SK-N-SH (cell line): ENCODE measurements at regions of chr2 and their contacts with region 1.

Region 1: GRCh38 chr2:113390124-113390849 is 47.2 kb upstream of the ZNG1B start:
- DNase-seq: peak; percentile 75
- H3K4me3 ChIP-seq: peak overlapping the region; percentile 24 to 66; a peak in 3 of 4 replicates
- H3K27ac ChIP-seq: no peak overlapping the region; a peak in 1 of 4 replicates
- H3K4me1 ChIP-seq: no peaks in the 10 kb centered on the region
- H3K27me3 ChIP-seq: peaks cover 37% of the 10 kb centered on the region; the same call in 1 of the 2 replicates
- CTCF ChIP-seq: peak; percentile 99
- EP300 ChIP-seq: no peak
- RAD21 ChIP-seq: peak; percentile 89

Region 2: DNA sequence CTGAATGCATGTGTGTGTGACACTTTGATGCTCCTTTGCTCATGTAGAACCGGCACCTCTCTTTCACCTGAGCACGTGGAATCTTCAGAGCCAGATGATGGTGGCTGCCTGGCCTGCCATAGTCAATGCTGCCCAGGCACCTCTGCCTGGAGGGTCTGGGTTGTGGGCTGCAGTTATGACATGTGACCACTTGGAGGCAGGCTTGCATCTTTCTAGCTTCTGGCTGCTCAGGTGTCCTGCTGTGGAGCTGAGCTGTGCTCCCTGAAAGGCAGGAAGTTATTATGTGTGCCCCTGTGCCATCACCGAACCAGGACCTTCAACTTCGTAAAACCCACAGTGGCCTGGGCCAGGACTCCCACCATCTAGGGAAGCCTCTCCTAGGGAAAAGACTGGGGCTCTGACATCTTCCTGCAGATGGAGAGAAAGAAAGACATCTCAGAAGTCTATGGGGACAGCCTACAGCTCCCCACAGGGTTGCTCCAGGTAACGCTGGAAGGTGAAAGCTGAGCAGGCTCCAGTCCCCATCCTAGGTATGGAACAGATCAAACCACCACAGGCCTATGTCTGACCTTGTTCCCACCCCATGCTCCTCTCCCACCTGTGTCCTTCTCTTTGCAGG is 186.3 kb before region 1 on chr2:
- CTCF ChIA-PET with region 1: interaction called, 98 read pairs
- POLR2A ChIA-PET with region 1: no interaction called
- DNase-seq: peak; percentile 86
- H3K4me3 ChIP-seq: no peak overlapping the region; a peak in 1 of 4 replicates
- H3K27ac ChIP-seq: no peak overlapping the region
- H3K4me1 ChIP-seq: no peaks in the 10 kb centered on the region; a peak in 1 of 4 replicates
- H3K27me3 ChIP-seq: no peaks in the 10 kb centered on the region
- CTCF ChIP-seq: peak; percentile 88
- EP300 ChIP-seq: no peak
- RAD21 ChIP-seq: peak; percentile 96

Region 3: GRCh38 chr2:113248997-113249770 is 141.1 kb before region 1 on chr2:
- CTCF ChIA-PET with region 1: interaction called, 25 read pairs
- POLR2A ChIA-PET with region 1: no interaction called
- DNase-seq: peak; percentile 77
- H3K4me3 ChIP-seq: no peak overlapping the region; a peak in 1 of 4 replicates
- H3K27ac ChIP-seq: no peak overlapping the region
- H3K4me1 ChIP-seq: no peaks in the 10 kb centered on the region
- H3K27me3 ChIP-seq: no peaks in the 10 kb centered on the region; the same call in 1 of the 2 replicates
- CTCF ChIP-seq: peak; percentile 95
- EP300 ChIP-seq: no peak
- RAD21 ChIP-seq: peak; percentile 83

Region 4: DNA sequence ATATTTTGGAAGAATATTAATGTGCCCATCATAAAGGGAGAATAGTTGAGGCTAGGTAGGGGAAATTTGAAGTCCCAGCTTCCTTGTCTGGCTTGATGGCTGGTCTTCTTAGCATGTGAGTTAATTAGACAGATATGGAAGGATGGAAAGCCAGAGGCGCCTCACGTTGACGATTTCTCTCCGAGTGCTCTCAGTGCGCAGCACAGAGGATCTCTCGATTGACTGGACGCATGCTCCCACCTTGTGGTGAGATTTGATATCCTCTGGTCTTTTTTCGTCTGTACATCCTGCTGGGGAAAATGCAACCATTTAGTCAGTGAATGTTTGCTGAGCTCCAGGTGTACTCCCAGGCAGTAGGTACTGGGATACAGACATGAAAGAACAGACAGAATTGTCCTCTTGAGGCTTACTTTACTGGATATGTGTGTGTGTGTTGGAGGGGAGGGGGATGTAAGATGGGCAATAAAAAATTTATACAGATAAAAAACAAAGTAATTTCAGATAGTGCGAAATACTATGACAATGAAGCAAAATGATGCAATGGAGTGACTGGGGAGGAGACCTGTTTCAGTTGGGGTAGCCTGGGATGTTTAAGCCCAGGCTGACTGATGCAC is 19.7 kb before region 1 on chr2:
- CTCF ChIA-PET with region 1: interaction called, 17 read pairs
- POLR2A ChIA-PET with region 1: no interaction called
- DNase-seq: peak; percentile 58
- H3K4me3 ChIP-seq: no peak overlapping the region; a peak in 1 of 4 replicates
- H3K27ac ChIP-seq: no peak overlapping the region
- H3K4me1 ChIP-seq: no peaks in the 10 kb centered on the region
- H3K27me3 ChIP-seq: peaks cover 21% of the 10 kb centered on the region; the same call in 1 of the 2 replicates
- CTCF ChIP-seq: peak; percentile 69
- EP300 ChIP-seq: no peak
- RAD21 ChIP-seq: peak; percentile 85

Region 5: GRCh38 chr2:113407446-113408099 is 17.3 kb after region 1 on chr2:
- CTCF ChIA-PET with region 1: interaction called, 14 read pairs
- POLR2A ChIA-PET with region 1: no interaction called
- DNase-seq: no peak
- H3K4me3 ChIP-seq: no peak overlapping the region
- H3K27ac ChIP-seq: no peak overlapping the region
- H3K4me1 ChIP-seq: no peaks in the 10 kb centered on the region
- H3K27me3 ChIP-seq: peaks cover 38% of the 10 kb centered on the region
- CTCF ChIP-seq: peak; percentile 35
- EP300 ChIP-seq: no peak
- RAD21 ChIP-seq: no peak

Region 6: GRCh38 chr2:113720167-113720566 is 329.9 kb after region 1 on chr2:
- CTCF ChIA-PET with region 1: no interaction called
- POLR2A ChIA-PET with region 1: no interaction called
- DNase-seq: peak; percentile 28
- H3K4me3 ChIP-seq: no peak overlapping the region; a peak in 1 of 4 replicates
- H3K27ac ChIP-seq: no peak overlapping the region
- H3K4me1 ChIP-seq: no peaks in the 10 kb centered on the region; a peak in 1 of 4 replicates
- H3K27me3 ChIP-seq: no peaks in the 10 kb centered on the region
- CTCF ChIP-seq: peak; percentile 67
- EP300 ChIP-seq: no peak
- RAD21 ChIP-seq: peak; percentile 25; the same call in 1 of the 2 replicates

Region 7: DNA sequence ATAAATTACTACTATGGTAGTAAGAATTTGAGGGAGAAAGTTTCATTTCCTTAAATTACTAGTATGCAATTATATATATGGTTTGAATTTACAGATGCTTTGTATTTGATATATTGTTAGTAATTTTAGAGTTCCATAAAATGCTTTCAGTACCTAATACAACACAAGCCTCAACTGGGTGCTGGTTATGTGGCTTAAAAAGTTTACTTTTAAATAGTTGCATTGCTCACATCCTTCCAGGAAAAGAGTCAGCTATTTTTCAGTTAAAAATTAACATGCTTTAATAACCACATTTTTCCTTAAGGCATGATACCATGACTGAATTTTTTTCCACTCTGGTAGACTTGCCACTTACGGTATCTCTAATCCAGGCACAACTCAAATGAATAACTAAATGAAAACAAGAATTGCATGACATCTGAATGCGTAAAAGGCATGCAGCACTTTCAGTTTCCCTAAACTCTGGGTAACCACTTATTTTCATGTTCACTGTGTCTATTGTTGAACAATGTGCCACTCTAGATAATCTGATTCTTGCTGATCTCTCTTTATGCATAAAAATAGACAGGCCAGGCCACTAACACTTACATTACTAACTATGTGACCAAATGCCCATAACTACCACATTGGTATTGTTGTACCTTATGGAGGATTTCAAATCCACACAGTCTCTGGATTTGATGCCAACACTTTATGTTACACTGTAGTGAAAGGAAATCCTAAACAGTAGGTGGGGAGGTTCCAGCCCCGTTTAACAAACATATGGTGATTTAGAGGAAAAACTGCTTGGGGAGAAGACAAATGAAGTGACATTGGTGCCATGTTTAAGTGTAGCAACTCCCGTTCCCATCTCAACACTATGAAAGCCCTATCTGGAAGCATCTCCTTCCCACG is 401.7 kb after region 1 on chr2:
- CTCF ChIA-PET with region 1: no interaction called
- POLR2A ChIA-PET with region 1: no interaction called
- DNase-seq: no peak
- H3K4me3 ChIP-seq: 0 out of 4 replicates have a peak overlapping the region, but pooled peaks of 1 of the 2 experiments have one; percentile 1
- H3K27ac ChIP-seq: peak overlapping the region in 1 of 2 experiments; percentile 12; a peak in 1 of 4 replicates
- H3K4me1 ChIP-seq: no peaks in the 10 kb centered on the region
- H3K27me3 ChIP-seq: no peaks in the 10 kb centered on the region
- CTCF ChIP-seq: no peak
- EP300 ChIP-seq: no peak
- RAD21 ChIP-seq: no peak